Sigmoid colon (tissue), 7 donors: ENCODE measurements at regions of chr4 and their contacts with region 1.

Region 1: GRCh38 chr4:173257732-173258717 is 76.1 kb downstream of the HMGB2 start:
- DNase-seq: peak; percentile 79
- H3K4me3 ChIP-seq: no peak overlapping the region
- H3K27ac ChIP-seq: no peak overlapping the region
- H3K4me1 ChIP-seq: peaks cover 0 to 5% (median 0%) of the 10 kb centered on the region in 4 donors
- H3K27me3 ChIP-seq: no peaks in the 10 kb centered on the region
- CTCF ChIP-seq: peak; percentile 67 to 77 (median 72)
- EP300 ChIP-seq: no peak
- POLR2A ChIP-seq: no peak

Region 2: GRCh38 chr4:173013232-173013930 is 244.6 kb before region 1 on chr4:
- intact Hi-C with region 1: loop called (anchors 2 kb)
- DNase-seq: no peak
- H3K4me3 ChIP-seq: no peak overlapping the region
- H3K27ac ChIP-seq: no peak overlapping the region
- H3K4me1 ChIP-seq: no peaks in the 10 kb centered on the region
- H3K27me3 ChIP-seq: no peaks in the 10 kb centered on the region
- CTCF ChIP-seq: peak; percentile 19 to 82 (median 45)
- EP300 ChIP-seq: no peak
- POLR2A ChIP-seq: no peak

Region 3: GRCh38 chr4:173025131-173025530 is 232.9 kb before region 1 on chr4:
- intact Hi-C with region 1: loop called (anchors 2 kb)
- DNase-seq: no peak
- H3K4me3 ChIP-seq: no peak overlapping the region
- H3K27ac ChIP-seq: no peak overlapping the region
- H3K4me1 ChIP-seq: no peaks in the 10 kb centered on the region
- H3K27me3 ChIP-seq: no peaks in the 10 kb centered on the region
- CTCF ChIP-seq: peak in 3 of 4 experiments; percentile 64 to 75 (median 69)
- EP300 ChIP-seq: no peak
- POLR2A ChIP-seq: no peak

Region 4: GRCh38 chr4:173168396-173169177 is 89.4 kb before region 1 on chr4 and contains the start of gene GALNT7:
- intact Hi-C with region 1: loop called (anchors 5 kb)
- DNase-seq: peak; percentile 87
- H3K4me3 ChIP-seq: peak within 1 kb of the TSS; percentile 82 to 90 (median 84)
- H3K27ac ChIP-seq: peak within 1 kb of the TSS; percentile 91 to 95 (median 92)
- H3K4me1 ChIP-seq: peaks cover 0 to 28% (median 15%) of the 10 kb centered on the region in 4 donors
- H3K27me3 ChIP-seq: no peaks in the 10 kb centered on the region
- CTCF ChIP-seq: no peak
- EP300 ChIP-seq: no peak
- POLR2A ChIP-seq: no peak
- total RNA-seq, gene GALNT7: 13.2 to 18.6 (median 16.7) TPM

Region 5: DNA sequence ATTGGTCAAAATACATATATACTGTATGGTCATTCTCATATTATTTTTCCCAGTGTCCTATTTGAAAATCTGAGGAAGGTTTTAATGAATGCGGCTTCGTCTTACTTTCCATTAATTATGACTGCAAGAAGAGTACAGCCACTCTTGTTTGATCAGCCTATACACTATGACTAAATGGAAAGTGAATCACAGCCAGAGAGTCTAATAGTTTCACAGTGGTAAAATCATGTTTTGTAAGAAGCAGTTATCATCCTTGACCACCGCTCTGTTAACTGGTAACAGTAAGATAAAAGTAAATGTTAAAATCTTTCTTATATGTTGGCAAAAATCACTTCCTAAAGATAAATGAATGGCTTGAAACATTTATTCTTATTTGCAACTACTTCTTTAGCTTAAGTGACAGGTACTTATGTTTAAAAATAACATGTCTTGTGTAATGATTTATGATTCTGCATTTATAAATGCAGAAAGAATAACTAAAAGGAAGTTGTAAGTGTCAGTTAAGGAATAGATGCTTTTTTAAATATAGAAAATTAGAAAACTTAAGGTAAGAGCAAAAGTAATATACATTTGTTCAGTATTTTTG is 76.2 kb before region 1 on chr4:
- intact Hi-C with region 1: no loop called
- DNase-seq: no peak
- H3K4me3 ChIP-seq: no peak overlapping the region
- H3K27ac ChIP-seq: no peak overlapping the region
- H3K4me1 ChIP-seq: peaks cover 0 to 28% (median 20%) of the 10 kb centered on the region in 4 donors
- H3K27me3 ChIP-seq: no peaks in the 10 kb centered on the region
- CTCF ChIP-seq: no peak
- EP300 ChIP-seq: no peak
- POLR2A ChIP-seq: no peak

Region 6: GRCh38 chr4:173448603-173449379 is 190.8 kb after region 1 on chr4:
- intact Hi-C with region 1: no loop called
- DNase-seq: no peak
- H3K4me3 ChIP-seq: peak overlapping the region in 3 of 4 donors; percentile 9 to 17 (median 14)
- H3K27ac ChIP-seq: peak overlapping the region; percentile 38 to 79 (median 70)
- H3K4me1 ChIP-seq: peaks cover 0 to 40% (median 28%) of the 10 kb centered on the region in 4 donors
- H3K27me3 ChIP-seq: no peaks in the 10 kb centered on the region
- CTCF ChIP-seq: no peak
- EP300 ChIP-seq: no peak
- POLR2A ChIP-seq: no peak

Region 7: GRCh38 chr4:174420316-174420715 is 1162.3 kb after region 1 on chr4:
- intact Hi-C with region 1: no loop called
- DNase-seq: no peak
- H3K4me3 ChIP-seq: no peak overlapping the region
- H3K27ac ChIP-seq: no peak overlapping the region
- H3K4me1 ChIP-seq: peaks cover 0 to 11% (median 10%) of the 10 kb centered on the region in 4 donors
- H3K27me3 ChIP-seq: no peaks in the 10 kb centered on the region
- CTCF ChIP-seq: no peak
- EP300 ChIP-seq: no peak
- POLR2A ChIP-seq: no peak